ENCODE measurements at regions of chr1 and their contacts with region 1.

Region 1: GRCh38 chr1:168082008-168082876 is 54.5 kb downstream of the GPR161 start:
- DNase-seq: peak; percentile 68 to 77
- H3K4me3 ChIP-seq: no peak overlapping the region
- H3K27ac ChIP-seq: peak overlapping the region in 2 of 3 donors; percentile 30 to 59
- H3K4me1 ChIP-seq: peaks cover 5 to 20% of the 10 kb centered on the region in 2 donors
- H3K27me3 ChIP-seq: no peaks in the 10 kb centered on the region
- CTCF ChIP-seq: peak; percentile 42 to 87 (median 80)
- POLR2A ChIP-seq: no peak

Region 2: GRCh38 chr1:167721617-167722151 is 360.6 kb before region 1 on chr1 and contains the start of gene MPZL1:
- intact Hi-C with region 1: loop called (anchors 10 kb)
- DNase-seq: peak; percentile 94 to 96
- H3K4me3 ChIP-seq: peak within 1 kb of the TSS; percentile 25 to 95 (median 76)
- H3K27ac ChIP-seq: peak within 1 kb of the TSS; percentile 76 to 94 (median 89)
- H3K4me1 ChIP-seq: peaks cover 16 to 17% of the 10 kb centered on the region in 2 donors
- H3K27me3 ChIP-seq: no peaks in the 10 kb centered on the region
- CTCF ChIP-seq: no peak
- POLR2A ChIP-seq: peak; percentile 23 to 90
- total RNA-seq, gene MPZL1: 52.6 to 90.2 (median 61.8) TPM

Region 3: DNA sequence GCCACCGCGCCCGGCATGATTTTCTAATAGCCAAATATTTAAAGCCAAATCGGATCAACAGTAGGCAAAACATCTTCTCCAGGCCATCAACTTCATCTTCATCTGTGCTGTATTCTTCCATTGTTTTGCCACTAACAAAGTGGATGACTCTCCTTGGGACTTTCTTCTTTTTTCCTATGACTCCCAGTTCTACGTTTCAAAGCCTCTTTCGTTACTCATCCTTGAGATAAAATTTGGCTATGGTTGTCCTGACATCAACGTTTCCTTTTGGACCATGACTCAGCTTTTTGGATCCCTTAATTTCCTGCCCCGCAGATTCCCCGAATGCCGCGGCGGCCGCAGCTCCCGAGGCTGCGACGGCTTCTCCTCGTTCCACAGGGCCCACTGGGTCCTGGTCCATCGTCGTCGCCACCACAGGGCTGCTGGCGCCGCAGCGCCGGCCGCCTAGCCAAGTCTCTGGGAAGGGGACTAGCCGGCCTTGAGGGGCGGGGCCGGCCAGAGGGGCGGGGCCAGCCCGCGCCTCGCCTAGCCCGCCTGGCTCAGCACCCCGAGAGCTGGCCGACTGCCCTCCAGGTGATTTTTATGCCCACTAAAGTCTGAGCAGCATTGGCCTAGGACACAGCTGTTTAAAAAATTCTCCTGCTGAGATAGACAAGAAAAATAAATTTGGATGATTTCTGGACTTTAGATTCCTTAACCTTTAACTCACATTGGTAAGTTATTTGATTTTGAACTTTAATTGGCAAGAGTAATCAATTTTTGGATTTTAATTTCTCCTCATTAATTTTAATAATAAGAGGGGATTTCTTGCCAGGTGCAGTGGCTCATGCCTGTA is 262.2 kb before region 1 on chr1:
- intact Hi-C with region 1: loop called (anchors 10 kb)
- DNase-seq: peak; percentile 88
- H3K4me3 ChIP-seq: peak overlapping the region in 1 of 3 donors; percentile 10
- H3K27ac ChIP-seq: peak overlapping the region; percentile 5 to 69 (median 57)
- H3K4me1 ChIP-seq: peaks cover 5 to 15% of the 10 kb centered on the region in 2 donors
- H3K27me3 ChIP-seq: no peaks in the 10 kb centered on the region
- CTCF ChIP-seq: no peak
- POLR2A ChIP-seq: peak in 1 of 2 donors; percentile 63